Caco-2 (cell line): ENCODE measurements at regions of chr1 and their contacts with region 1.

Region 1: DNA sequence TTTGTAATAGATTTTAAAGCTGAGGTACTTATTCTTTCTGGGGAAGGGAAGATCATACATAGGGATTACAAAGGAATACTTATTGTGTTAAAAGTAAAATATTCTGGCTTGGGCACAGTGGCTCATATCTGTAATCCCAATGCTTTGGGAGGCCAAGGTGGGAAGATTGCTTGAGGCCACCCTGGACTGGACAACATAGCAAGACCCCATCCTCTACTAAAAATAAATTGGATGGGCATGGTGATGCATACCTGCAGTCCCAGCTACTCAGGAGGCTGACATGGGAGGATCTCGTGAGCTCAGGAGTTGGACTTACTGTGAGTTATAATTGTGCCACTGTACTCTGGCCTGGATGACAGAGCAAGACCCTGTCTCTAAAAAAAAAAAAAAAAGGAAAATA is 27.6 kb downstream of the GABPB2 start:
- DNase-seq: peak in 1 of 2 experiments; percentile 2
- H3K4me3 ChIP-seq: no peak overlapping the region
- H3K4me3 Mint-ChIP-seq: no peak overlapping the region
- H3K27ac Mint-ChIP-seq: no peak overlapping the region
- H3K4me1 ChIP-seq: no peaks in the 10 kb centered on the region
- H3K4me1 Mint-ChIP-seq: no peaks in the 10 kb centered on the region
- H3K27me3 ChIP-seq: no peaks in the 10 kb centered on the region
- H3K27me3 Mint-ChIP-seq: no peaks in the 10 kb centered on the region
- CTCF ChIP-seq: no peak

Region 2: DNA sequence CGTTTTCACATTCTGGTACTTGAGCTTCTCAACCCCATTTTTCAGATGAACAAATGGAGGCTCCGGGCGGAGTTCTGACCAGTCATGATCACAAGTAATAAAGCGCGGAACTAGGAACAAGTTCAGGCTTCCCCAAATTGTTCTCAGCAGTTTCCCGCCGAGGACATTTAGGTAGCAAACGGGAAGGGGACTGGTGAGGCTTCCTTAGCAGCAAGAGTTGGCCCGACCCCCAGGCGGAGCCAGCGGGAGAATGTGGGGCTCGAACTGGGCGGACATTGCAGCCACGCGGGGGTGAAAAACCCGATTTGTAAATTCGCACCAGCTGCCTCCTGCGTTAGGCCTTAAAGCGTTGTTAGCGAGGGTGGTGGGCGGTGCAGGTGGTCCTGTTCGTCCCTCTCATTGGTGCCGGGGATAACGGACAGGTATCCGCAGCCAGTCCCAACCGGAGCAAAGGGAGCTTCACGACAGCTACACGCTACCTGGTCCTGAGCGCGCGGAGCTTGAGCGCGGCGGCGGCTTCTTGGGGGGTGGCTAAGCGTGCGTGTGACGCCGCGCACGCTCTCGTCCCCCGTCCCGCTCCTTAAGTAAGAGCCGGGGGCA is 33.0 kb after region 1 on chr1:
- CTCF ChIA-PET with region 1: interaction called, 26 read pairs
- POLR2A ChIA-PET with region 1: interaction called, 7 read pairs
- intact Hi-C with region 1: no loop called
- DNase-seq: peak; percentile 93 to 96
- H3K4me3 ChIP-seq: peak overlapping the region; percentile 32
- H3K4me3 Mint-ChIP-seq: peak overlapping the region; percentile 77
- H3K27ac Mint-ChIP-seq: peak overlapping the region; percentile 73
- H3K4me1 ChIP-seq: peaks cover 5% of the 10 kb centered on the region; the same call in 1 of the 2 replicates
- H3K4me1 Mint-ChIP-seq: no peaks in the 10 kb centered on the region
- H3K27me3 ChIP-seq: no peaks in the 10 kb centered on the region
- H3K27me3 Mint-ChIP-seq: no peaks in the 10 kb centered on the region
- CTCF ChIP-seq: no peak

Region 3: GRCh38 chr1:151156515-151156819 is 58.3 kb after region 1 on chr1 and contains the start of gene TNFAIP8L2:
- CTCF ChIA-PET with region 1: interaction called, 69 read pairs
- POLR2A ChIA-PET with region 1: no interaction called
- intact Hi-C with region 1: loop called (anchors 1 kb)
- DNase-seq: no peak
- H3K4me3 ChIP-seq: no peak within 1 kb of the TSS
- H3K4me3 Mint-ChIP-seq: no peak within 1 kb of the TSS
- H3K27ac Mint-ChIP-seq: no peak within 1 kb of the TSS
- H3K4me1 ChIP-seq: 0 out of 2 replicates have a peak, but pooled peaks cover 5% of the 10 kb centered on the region
- H3K4me1 Mint-ChIP-seq: no peaks in the 10 kb centered on the region
- H3K27me3 ChIP-seq: no peaks in the 10 kb centered on the region
- H3K27me3 Mint-ChIP-seq: no peaks in the 10 kb centered on the region
- CTCF ChIP-seq: no peak
- total RNA-seq, gene TNFAIP8L2: not detected in 2 replicates

Region 4: DNA sequence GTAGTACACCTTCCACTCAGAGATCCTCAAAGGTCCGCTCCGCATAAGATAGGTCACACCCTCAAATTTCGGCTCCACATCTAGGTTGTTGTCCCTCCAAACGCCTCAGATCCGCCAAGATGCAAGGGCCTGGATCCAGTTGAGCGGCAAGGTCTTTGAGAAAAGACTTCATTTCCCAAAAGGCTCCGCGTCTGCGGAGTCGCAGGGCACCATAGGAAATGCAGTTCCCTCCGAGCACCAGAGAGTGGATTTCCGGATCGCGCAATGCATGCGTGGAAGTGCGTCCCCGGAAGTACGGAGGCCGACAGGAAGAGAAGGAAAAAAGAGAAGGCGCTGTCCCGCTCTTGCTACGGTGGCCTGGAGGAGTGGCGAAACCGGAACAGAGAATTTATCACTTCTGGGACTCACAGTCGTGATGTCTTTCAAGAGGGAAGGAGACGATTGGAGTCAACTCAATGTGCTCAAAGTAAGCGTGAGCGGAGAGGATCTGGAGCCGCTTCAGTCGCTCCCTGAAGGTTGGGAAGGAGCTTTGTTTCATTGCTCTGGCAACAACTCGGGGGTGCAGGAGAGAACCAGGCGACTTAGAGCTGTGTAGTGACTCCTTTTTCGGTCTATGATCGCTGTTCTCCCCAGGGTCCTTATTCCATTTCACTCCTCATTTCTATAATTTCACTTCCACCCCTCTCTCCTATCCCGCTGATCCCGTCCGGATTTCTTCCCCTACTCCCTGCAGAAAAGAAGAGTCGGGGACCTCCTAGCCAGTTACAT is 67.8 kb after region 1 on chr1 and contains the starts of genes LYSMD1 and SCNM1:
- CTCF ChIA-PET with region 1: interaction called, 13 read pairs
- POLR2A ChIA-PET with region 1: no interaction called
- intact Hi-C with region 1: no loop called
- DNase-seq: peak; percentile 95 to 98
- H3K4me3 ChIP-seq: peak within 1 kb of the TSS; percentile 62
- H3K4me3 Mint-ChIP-seq: peak within 1 kb of the TSS; percentile 96
- H3K27ac Mint-ChIP-seq: peak within 1 kb of the TSS; percentile 96
- H3K4me1 ChIP-seq: no peaks in the 10 kb centered on the region
- H3K4me1 Mint-ChIP-seq: peaks cover 9% of the 10 kb centered on the region
- H3K27me3 ChIP-seq: no peaks in the 10 kb centered on the region
- H3K27me3 Mint-ChIP-seq: no peaks in the 10 kb centered on the region
- CTCF ChIP-seq: no peak
- total RNA-seq, gene LYSMD1: 4.0 and 5.0 TPM in 2 replicates
- total RNA-seq, gene SCNM1: 52.1 and 53.6 TPM in 2 replicates